Dendritic cell treated with granulocyte-macrophage colony-stimulating factor and Interleukin-4, amounts not matched to agents 40 ng/mL and 50 ng/mL, for 4 days (primary cell): ENCODE measurements at regions of chr7 and their contacts with region 1.

Region 1: GRCh38 chr7:77798394-77799077 is at the starts of genes PHTF2 and TMEM60:
- H3K4me3 Mint-ChIP-seq: peak within 1 kb of the TSS; percentile 98
- H3K27ac Mint-ChIP-seq: peak within 1 kb of the TSS; percentile 97
- H3K4me1 Mint-ChIP-seq: peaks cover 67% of the 10 kb centered on the region
- H3K27me3 Mint-ChIP-seq: no peaks in the 10 kb centered on the region

Region 2: GRCh38 chr7:77696198-77697028 is 102.1 kb before region 1 on chr7 and contains the start of gene RSBN1L:
- intact Hi-C with region 1: loop called (anchors 5 kb)
- H3K4me3 Mint-ChIP-seq: peak within 1 kb of the TSS; percentile 100
- H3K27ac Mint-ChIP-seq: peak within 1 kb of the TSS; percentile 100
- H3K4me1 Mint-ChIP-seq: peaks cover 35% of the 10 kb centered on the region
- H3K27me3 Mint-ChIP-seq: no peaks in the 10 kb centered on the region

Region 3: GRCh38 chr7:77747178-77747577 is 51.4 kb before region 1 on chr7:
- intact Hi-C with region 1: no loop called
- H3K4me3 Mint-ChIP-seq: no peak overlapping the region
- H3K27ac Mint-ChIP-seq: no peak overlapping the region
- H3K4me1 Mint-ChIP-seq: peaks cover 14% of the 10 kb centered on the region
- H3K27me3 Mint-ChIP-seq: no peaks in the 10 kb centered on the region

Region 4: DNA sequence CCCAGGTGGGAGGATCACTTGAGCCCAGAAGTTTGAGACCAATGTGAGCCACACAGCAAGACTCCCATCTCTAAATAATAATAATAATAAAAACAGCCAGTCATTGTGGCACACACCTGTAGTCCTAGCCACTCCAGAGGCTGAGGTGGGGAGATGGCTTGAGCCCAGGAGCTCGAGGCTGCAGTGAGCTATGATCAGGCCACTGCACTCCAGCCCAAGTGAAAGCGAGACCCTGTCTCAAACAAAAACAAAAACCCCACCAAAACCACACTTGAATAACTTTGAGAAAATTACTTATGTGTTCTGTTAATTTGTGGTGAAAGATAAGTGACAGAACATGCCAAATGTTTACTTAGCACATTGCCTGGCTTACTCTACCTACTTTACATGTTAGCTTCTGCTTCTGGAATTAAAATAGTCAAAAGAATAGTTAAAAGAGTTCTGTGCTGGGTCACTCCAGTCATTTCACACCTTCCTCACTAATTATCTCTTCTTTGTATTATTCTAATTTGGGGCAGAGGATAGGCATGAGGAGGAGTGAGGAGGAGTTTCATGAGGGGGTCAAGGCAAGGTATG is 10.1 kb before region 1 on chr7:
- intact Hi-C with region 1: loop called (anchors 2 kb)
- H3K4me3 Mint-ChIP-seq: no peak overlapping the region
- H3K27ac Mint-ChIP-seq: no peak overlapping the region
- H3K4me1 Mint-ChIP-seq: peaks cover 20% of the 10 kb centered on the region
- H3K27me3 Mint-ChIP-seq: no peaks in the 10 kb centered on the region

Region 5: DNA sequence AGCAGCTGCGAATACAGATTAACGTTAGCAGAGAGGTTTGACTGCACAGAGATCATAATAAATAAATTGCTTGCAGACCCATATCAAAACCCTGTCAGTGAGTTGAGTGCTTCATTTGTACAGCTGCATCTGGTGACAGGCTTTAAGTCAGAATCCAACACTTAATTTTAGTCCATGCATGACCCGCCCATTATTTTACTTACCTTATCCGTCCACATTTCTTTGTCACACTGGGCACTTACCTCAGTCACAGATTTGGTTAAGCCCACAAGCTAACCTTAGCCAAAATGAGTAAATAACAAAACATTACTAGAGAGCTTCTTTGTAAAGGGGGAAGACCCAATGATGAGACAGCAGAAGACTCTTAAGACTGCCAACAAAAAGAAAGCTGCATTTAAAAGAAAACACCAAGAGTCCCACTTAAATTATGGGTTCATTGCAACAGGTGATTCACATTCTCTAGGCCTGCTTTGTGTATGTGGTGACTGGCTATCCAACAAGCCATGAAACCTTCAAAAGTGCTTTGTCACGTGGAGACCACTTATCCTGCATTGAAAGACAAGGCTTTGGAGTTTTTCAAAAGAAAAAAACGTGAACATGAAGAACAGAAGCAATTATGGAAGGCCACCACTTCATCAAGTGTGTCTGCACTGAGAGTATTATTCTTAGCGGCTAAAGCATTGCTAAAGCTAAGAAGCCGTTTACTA is 32.3 kb after region 1 on chr7:
- intact Hi-C with region 1: loop called (anchors 5 kb)
- H3K4me3 Mint-ChIP-seq: no peak overlapping the region
- H3K27ac Mint-ChIP-seq: peak overlapping the region; percentile 46
- H3K4me1 Mint-ChIP-seq: peaks cover 37% of the 10 kb centered on the region
- H3K27me3 Mint-ChIP-seq: no peaks in the 10 kb centered on the region

Region 6: DNA sequence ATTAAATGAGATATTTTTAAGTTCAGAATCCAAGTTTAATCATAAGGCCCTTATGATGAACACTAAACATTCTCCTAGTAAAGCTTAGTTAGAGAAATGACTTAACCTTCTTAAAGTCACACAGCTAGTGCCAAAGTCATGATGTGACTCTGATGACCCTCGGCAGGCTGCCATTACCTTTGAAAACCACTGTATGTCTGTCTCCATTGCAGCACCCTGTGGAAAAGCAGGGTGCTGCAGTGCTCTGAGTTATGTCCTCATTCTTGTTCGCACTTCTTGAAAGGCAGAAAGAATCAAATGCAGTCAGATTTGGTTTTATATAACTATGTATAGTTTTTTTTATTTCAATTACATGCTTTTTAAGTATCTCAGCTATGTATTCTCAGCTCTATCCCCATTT is 105.1 kb after region 1 on chr7:
- intact Hi-C with region 1: loop called (anchors 2 kb)
- H3K4me3 Mint-ChIP-seq: no peak overlapping the region
- H3K27ac Mint-ChIP-seq: no peak overlapping the region
- H3K4me1 Mint-ChIP-seq: peaks cover 5% of the 10 kb centered on the region
- H3K27me3 Mint-ChIP-seq: no peaks in the 10 kb centered on the region